Stomach (tissue), 19 donors: ENCODE measurements at regions of chr9 and their contacts with region 1.

Region 1: DNA sequence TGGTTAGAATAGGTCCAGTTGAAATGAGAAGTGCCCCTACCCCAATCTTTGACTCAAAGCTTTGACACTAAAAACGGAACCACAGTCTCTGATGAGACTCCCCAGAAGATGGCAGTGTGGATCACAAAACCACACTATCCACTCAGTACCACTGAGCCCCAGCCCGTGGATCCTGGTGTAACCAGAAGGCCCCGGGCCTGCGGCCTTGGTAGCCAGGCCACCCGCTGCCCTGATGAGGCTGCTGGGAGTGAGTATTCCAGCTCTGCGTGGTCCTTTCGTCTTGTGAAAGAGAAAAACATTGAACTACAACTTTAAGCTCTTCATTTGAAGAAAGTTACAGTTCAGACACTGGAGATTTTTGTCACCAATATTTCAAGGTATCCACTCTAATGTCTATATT is 42.2 kb upstream of the FBP1 start:
- DNase-seq: peak; percentile 80 to 91
- H3K4me3 ChIP-seq: no peak overlapping the region
- H3K27ac ChIP-seq: peak overlapping the region in 4 of 5 donors; percentile 1 to 58 (median 10)
- H3K4me1 ChIP-seq: peaks cover 0 to 11% (median 0%) of the 10 kb centered on the region in 4 donors
- H3K27me3 ChIP-seq: no peaks in the 10 kb centered on the region
- CTCF ChIP-seq: peak in 5 of 7 experiments; percentile 39 to 71 (median 68)
- EP300 ChIP-seq: no peak
- POLR2A ChIP-seq: no peak

Region 2: DNA sequence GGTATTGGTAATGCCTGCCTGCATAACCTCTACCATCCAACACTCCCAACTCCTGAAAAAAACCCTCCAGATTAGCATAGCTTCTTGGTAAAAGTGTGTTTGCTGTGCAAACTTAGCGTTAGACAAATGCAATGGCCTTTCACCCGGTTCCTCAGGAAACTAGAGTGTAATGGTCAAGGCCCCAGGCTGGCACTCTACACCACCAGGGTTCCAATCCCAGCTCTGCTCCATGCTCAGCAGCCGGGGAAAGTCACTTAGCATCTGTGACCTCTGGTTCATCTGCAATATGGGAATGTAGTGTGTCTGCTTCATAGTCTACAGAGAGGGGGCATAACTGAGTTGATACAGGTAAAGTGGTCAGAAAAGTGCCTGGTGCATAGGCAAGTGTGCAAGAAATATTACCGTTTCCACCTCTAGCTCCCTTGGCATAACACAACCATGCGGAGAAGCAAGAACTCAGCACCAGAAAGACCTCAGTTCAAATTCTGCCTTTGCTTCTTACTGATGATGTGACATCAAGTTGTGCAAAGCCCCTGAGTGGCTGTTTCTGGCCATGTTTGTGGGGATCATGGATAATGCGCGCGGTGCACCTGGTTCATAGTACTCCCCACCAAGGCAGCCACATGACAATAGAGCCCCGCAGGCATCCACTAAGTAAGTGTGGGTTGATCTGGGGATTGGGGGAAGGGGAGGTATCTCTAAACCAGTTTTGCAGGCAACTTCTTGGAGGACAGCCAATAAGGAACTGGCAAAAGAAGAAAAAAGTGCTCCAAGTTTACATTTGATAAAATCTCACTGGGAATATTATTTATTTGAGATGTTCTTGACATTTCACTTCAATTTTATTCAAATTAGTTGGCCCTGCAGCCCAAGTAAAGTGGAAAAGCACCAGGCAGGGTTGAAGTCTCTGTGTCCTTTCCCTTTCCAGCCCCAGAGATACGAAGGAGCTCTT is 51.0 kb before region 1 on chr9:
- intact Hi-C with region 1: no loop called
- DNase-seq: peak; percentile 67 to 84
- H3K4me3 ChIP-seq: peak overlapping the region in 1 of 4 donors; percentile 5
- H3K27ac ChIP-seq: peak overlapping the region; percentile 71 to 90 (median 79)
- H3K4me1 ChIP-seq: peaks cover 26 to 50% (median 30%) of the 10 kb centered on the region in 4 donors
- H3K27me3 ChIP-seq: no peaks in the 10 kb centered on the region
- CTCF ChIP-seq: no peak
- EP300 ChIP-seq: no peak
- POLR2A ChIP-seq: no peak

Region 3: GRCh38 chr9:94772639-94773303 is 91.3 kb after region 1 on chr9:
- intact Hi-C with region 1: loop called (anchors 10 kb)
- DNase-seq: peak in 1 of 2 donors; percentile 63
- H3K4me3 ChIP-seq: no peak overlapping the region
- H3K27ac ChIP-seq: no peak overlapping the region
- H3K4me1 ChIP-seq: peaks cover 0 to 3% (median 0%) of the 10 kb centered on the region in 4 donors
- H3K27me3 ChIP-seq: no peaks in the 10 kb centered on the region
- CTCF ChIP-seq: no peak
- EP300 ChIP-seq: no peak
- POLR2A ChIP-seq: no peak

Region 4: GRCh38 chr9:94805585-94805984 is 124.1 kb after region 1 on chr9:
- intact Hi-C with region 1: no loop called
- DNase-seq: peak in 1 of 2 donors; percentile 86
- H3K4me3 ChIP-seq: no peak overlapping the region
- H3K27ac ChIP-seq: peak overlapping the region in 4 of 5 donors; percentile 60 to 76 (median 68)
- H3K4me1 ChIP-seq: peaks cover 4 to 31% (median 20%) of the 10 kb centered on the region in 4 donors
- H3K27me3 ChIP-seq: no peaks in the 10 kb centered on the region
- CTCF ChIP-seq: no peak
- EP300 ChIP-seq: no peak
- POLR2A ChIP-seq: no peak

Region 5: DNA sequence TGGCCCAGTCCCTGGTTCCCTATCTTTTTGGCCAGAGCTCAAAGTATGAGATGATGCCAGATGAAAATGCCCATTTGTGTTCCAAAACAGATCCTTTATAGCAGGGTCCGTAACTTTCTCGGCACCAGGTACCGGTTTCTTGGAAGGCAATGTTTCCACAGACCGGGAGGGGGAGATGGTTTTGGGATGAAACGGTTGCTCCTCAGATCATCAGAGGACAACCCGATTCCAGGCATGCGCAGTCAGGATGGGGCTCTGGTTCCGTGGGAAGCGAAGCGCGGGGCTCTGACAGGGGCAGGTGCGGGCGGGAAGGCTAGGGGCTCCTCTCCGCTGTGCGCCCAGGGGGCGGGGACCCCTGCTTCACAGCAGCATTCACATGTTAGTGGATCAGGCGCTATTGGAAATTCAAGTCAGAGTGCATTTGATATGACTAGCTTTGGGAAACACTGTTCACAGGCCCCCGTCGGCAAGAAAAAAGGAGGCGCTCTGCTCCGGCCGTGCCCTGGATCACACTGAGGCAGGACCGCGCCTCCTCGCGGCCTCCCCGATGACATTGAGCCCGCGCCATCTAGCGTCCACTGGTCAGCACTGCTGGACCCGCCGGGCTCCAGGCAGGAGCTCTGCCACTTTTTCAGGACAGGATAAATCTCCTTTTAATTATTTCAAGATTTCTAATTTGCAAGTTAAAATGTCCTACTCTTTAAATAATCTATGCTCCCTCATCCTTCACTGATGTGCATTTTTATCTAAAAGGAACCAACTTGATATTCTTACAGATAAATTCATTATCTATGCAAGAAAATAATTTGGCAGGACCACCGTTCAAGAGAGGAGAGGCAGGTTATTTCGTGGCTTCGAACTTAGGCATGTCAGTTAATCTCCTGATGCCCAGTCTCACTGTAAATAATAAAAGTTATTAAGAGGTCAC is 446.0 kb after region 1 on chr9:
- intact Hi-C with region 1: loop called (anchors 5 kb)
- DNase-seq: peak; percentile 92 to 95
- H3K4me3 ChIP-seq: peak overlapping the region; percentile 27 to 41 (median 34)
- H3K27ac ChIP-seq: peak overlapping the region in 2 of 5 donors; percentile 2 to 80
- H3K4me1 ChIP-seq: peaks cover 8 to 65% (median 41%) of the 10 kb centered on the region in 4 donors
- H3K27me3 ChIP-seq: no peaks in the 10 kb centered on the region
- CTCF ChIP-seq: peak in 5 of 7 experiments; percentile 76 to 95 (median 94)
- EP300 ChIP-seq: no peak
- POLR2A ChIP-seq: no peak